ENCODE measurements at regions of chr10 and their contacts with region 1.

Region 1: DNA sequence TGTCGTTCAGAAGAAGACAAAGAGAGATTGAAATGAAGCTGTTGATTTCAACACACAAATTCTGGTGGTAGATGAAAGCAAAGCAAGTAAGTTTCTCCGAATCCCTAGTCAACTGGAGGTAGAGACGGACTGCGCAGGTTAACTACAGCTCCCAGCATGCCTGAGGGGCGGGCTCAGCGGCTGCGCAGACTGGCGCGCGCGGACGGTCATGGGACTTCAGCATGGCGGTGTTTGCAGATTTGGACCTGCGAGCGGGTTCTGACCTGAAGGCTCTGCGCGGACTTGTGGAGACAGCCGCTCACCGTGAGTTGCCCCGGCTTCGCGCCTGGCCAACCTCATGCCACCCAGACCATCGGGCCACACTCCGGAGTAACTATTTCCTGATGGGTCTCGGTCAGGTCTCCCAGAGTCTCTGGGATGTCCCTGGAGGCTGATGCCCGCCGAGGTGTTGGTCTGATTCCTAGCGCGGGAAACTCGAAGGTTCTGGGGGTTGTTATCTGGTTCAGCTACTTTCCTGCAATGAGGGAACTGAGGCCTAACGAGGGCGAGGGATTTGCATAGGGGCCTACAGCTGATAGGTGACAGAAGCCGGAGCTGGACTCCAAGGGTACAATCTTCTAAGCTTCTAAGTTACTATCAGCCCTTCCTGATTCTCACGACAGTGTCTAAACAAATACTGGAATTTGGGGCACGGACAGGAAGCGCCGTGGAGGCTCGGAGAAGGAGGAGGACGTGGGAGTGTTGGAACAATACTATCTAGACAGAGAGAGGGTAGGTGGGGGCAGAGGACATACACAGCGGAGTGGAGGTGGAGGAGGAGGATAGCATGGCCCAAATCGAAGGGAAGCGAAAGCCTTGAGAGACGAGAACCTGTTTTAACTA is at the start of gene RPP30:
- DNase-seq: peak; percentile 68 to 84 (median 74)
- H3K4me3 ChIP-seq: peak within 1 kb of the TSS; percentile 81
- H3K4me3 Mint-ChIP-seq: peak within 1 kb of the TSS; percentile 95 to 98 (median 96)
- H3K27ac ChIP-seq: peak within 1 kb of the TSS; percentile 34
- H3K27ac Mint-ChIP-seq: peak within 1 kb of the TSS; percentile 76 to 93 (median 88)
- H3K4me1 ChIP-seq: peaks cover 17% of the 10 kb centered on the region
- H3K4me1 Mint-ChIP-seq: peaks cover 34 to 50% (median 42%) of the 10 kb centered on the region in 3 donors
- H3K27me3 ChIP-seq: no peaks in the 10 kb centered on the region
- H3K27me3 Mint-ChIP-seq: peaks cover 9 to 30% of the 10 kb centered on the region in 2 donors
- total RNA-seq, gene RPP30: 123 to 130 TPM

Region 2: DNA sequence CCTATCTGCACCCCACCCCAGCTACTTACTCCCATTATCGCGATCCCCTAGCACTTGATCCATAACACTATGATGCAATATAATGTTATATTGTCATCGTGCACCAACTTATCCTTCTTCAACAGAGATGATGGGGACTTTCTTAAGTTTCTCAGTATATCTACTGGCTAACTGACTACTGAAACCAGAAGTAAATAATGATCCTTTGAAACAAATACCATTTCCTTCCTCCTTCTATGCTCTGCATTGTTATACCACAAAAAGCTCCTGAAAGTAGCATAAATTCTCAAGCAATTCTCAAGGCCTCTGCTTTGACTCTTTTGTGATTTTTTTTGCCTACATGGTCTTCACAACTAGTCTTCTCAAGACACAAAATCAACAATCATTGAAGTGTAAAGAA is 83.0 kb before region 1 on chr10:
- CTCF ChIA-PET with region 1: no interaction called
- POLR2A ChIA-PET with region 1: no interaction called
- DNase-seq: no peak
- H3K4me3 ChIP-seq: no peak overlapping the region
- H3K4me3 Mint-ChIP-seq: no peak overlapping the region
- H3K27ac ChIP-seq: no peak overlapping the region
- H3K27ac Mint-ChIP-seq: no peak overlapping the region
- H3K4me1 ChIP-seq: no peaks in the 10 kb centered on the region
- H3K4me1 Mint-ChIP-seq: no peaks in the 10 kb centered on the region
- H3K27me3 ChIP-seq: no peaks in the 10 kb centered on the region
- H3K27me3 Mint-ChIP-seq: peaks cover 8 to 28% of the 10 kb centered on the region in 2 donors

Region 3: GRCh38 chr10:90860790-90861189 is 11.2 kb before region 1 on chr10:
- CTCF ChIA-PET with region 1: interaction called, 10 read pairs
- POLR2A ChIA-PET with region 1: interaction called, 3 read pairs
- DNase-seq: no peak
- H3K4me3 ChIP-seq: no peak overlapping the region
- H3K4me3 Mint-ChIP-seq: no peak overlapping the region
- H3K27ac ChIP-seq: no peak overlapping the region
- H3K27ac Mint-ChIP-seq: no peak overlapping the region
- H3K4me1 ChIP-seq: peaks cover 5% of the 10 kb centered on the region
- H3K4me1 Mint-ChIP-seq: peaks cover 5 to 15% (median 14%) of the 10 kb centered on the region in 3 donors
- H3K27me3 ChIP-seq: peaks cover 21% of the 10 kb centered on the region
- H3K27me3 Mint-ChIP-seq: peaks cover 19 to 66% of the 10 kb centered on the region in 2 donors